ENCODE measurements at regions of chr9 and their contacts with region 1.

Region 1: GRCh38 chr9:21688108-21689102 is 114.0 kb upstream of the MTAP start:
- DNase-seq: no peak
- ATAC-seq: peak; percentile 30
- H3K4me3 Mint-ChIP-seq: no peak overlapping the region
- H3K27ac Mint-ChIP-seq: no peak overlapping the region
- H3K4me1 Mint-ChIP-seq: peaks cover 52% of the 10 kb centered on the region
- H3K27me3 Mint-ChIP-seq: peaks cover 3% of the 10 kb centered on the region

Region 2: GRCh38 chr9:21357479-21358460 is 330.6 kb before region 1 on chr9:
- CTCF ChIA-PET with region 1: no interaction called
- POLR2A ChIA-PET with region 1: no interaction called
- intact Hi-C with region 1: loop called in 1 of 2 experiments (anchors 1 kb)
- DNase-seq: peak; percentile 40
- ATAC-seq: peak; percentile 94
- H3K4me3 Mint-ChIP-seq: peak overlapping the region; percentile 35
- H3K27ac Mint-ChIP-seq: peak overlapping the region; percentile 70
- H3K4me1 Mint-ChIP-seq: peaks cover 19% of the 10 kb centered on the region
- H3K27me3 Mint-ChIP-seq: peaks cover 18% of the 10 kb centered on the region

Region 3: DNA sequence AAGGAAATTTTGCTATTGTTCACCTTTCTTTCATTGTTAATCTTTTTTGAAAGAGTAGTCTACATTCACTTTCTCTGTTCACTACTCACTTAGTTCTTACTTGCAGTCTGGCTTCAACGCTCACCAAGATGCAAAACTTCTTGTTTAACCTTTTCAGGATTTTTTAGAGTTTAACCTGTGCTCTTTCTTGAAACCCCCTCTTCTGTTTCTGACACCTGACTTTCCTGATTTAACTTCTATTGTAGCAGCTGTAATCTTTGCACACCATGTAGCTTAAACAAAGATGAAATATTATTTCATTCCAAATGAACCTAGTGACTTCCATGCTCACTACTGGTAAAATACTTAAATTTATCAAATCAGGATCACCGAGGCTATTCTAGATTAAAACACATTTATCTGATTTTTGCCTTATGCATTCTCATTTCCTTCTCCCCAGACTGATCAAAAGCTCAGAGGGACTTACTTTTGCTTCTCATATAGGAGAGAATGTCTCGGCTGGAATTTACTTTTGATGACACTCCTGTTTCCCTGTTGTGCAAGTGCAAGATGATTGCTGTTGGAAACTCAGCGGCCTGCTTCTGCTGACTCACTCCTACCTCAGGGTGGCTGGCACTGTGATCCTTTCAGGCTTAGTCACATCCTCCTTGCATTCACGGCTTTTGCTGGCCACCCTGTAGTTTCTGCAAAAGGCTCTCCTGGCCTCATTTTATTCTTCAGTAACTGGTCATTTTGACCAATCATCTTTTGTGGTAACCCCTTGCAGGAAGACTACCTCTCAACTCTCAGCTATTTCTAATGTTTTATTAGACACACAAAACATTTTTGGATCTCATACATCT is 97.0 kb before region 1 on chr9:
- CTCF ChIA-PET with region 1: no interaction called
- POLR2A ChIA-PET with region 1: no interaction called
- intact Hi-C with region 1: loop called (anchors 1 to 5 kb)
- DNase-seq: peak; percentile 81
- ATAC-seq: peak; percentile 99
- H3K4me3 Mint-ChIP-seq: no peak overlapping the region
- H3K27ac Mint-ChIP-seq: peak overlapping the region; percentile 11
- H3K4me1 Mint-ChIP-seq: peaks cover 18% of the 10 kb centered on the region
- H3K27me3 Mint-ChIP-seq: no peaks in the 10 kb centered on the region

Region 4: DNA sequence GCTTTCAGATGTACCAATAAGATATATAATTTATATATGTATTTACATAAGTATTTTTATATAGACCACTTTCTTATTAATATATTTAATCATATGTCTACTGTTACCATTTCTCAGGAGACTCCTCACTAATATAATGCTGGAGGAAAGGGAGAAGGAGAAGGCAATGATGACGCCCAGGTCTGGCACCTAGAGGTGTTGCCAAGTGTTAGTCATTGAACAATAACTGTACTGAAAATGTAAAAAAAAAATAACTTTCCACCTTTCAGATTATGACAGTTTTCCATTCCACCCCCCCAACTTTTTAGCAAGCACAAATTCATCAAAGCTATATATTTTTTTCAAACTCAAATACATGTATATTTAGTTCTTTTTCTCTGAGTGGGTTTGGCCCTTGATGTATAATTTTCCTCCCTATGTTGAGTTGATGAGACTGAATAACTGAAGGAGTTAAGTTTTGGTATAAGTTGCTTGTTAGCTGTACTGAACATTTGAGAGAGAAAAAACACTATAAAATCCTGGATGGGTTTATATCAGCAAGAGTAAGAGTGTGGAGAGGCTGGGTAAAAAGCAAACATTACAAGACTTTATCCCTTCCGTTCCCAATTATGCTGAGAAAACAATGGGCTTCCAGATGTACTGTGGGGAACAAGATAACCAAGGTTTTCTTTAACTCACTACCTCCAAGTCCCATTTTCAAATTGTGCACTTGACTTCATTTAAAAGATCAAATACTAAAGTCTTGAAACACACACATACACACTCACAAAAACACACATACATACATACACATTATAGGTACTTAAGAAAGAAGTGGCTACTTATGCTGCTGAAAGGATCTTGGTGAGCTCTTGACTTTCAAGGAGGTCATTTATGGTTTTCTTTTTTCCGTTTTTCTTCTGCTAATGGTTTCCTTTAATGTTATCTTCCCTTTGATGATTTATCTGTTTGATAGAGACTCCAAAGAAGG is 63.4 kb before region 1 on chr9:
- CTCF ChIA-PET with region 1: no interaction called
- POLR2A ChIA-PET with region 1: no interaction called
- intact Hi-C with region 1: loop called in 1 of 2 experiments (anchors 1 kb)
- DNase-seq: peak; percentile 37
- ATAC-seq: peak; percentile 80
- H3K4me3 Mint-ChIP-seq: no peak overlapping the region
- H3K27ac Mint-ChIP-seq: peak overlapping the region; percentile 28
- H3K4me1 Mint-ChIP-seq: peaks cover 29% of the 10 kb centered on the region
- H3K27me3 Mint-ChIP-seq: no peaks in the 10 kb centered on the region

Region 5: DNA sequence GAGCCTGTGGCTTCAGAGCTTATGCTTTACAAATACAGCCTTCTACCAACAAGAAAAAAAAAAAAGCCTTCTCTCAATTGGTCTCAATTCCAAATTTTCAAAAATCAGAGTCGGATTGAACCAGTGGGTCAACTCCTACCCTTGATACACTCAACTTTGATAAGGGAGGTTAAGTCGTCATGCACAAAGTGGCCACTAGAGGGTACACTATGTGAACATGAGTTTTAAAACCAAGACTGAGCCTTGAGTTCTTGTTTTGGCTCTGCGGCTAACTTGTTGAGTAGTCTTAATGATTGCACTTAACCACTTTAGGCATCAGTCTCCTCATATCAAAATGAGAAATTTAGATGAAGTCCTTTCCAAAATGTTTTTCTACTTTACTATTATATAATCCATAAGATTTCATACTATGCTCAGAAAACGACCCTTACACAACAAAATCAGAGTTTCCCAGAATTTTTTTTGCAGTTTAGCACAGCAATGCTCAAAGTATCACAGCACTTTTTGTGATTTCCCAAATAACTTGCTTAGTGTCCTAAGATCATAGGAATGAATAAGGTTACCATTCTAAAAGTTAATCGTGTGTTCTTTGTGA is 21.2 kb after region 1 on chr9:
- CTCF ChIA-PET with region 1: interaction called, 25 read pairs
- POLR2A ChIA-PET with region 1: no interaction called
- intact Hi-C with region 1: no loop called
- DNase-seq: peak; percentile 79
- ATAC-seq: peak; percentile 53
- H3K4me3 Mint-ChIP-seq: no peak overlapping the region
- H3K27ac Mint-ChIP-seq: no peak overlapping the region
- H3K4me1 Mint-ChIP-seq: peaks cover 19% of the 10 kb centered on the region
- H3K27me3 Mint-ChIP-seq: peaks cover 2% of the 10 kb centered on the region